Activated T-helper 1 cell treated with anti-CD3 and anti-CD28 coated beads, Interleukin-12 subunit alpha, Interleukin-12 subunit beta, Interleukin-2, Interleukin-4 antibody, amounts not matched to agents 30 ng/mL and 10 ng/mL and 1 ng/mL, durations not matched to agents 14 hours and 24 hours and 36 hours (primary cell): ENCODE measurements at regions of chr14 and their contacts with region 1.

Region 1: DNA sequence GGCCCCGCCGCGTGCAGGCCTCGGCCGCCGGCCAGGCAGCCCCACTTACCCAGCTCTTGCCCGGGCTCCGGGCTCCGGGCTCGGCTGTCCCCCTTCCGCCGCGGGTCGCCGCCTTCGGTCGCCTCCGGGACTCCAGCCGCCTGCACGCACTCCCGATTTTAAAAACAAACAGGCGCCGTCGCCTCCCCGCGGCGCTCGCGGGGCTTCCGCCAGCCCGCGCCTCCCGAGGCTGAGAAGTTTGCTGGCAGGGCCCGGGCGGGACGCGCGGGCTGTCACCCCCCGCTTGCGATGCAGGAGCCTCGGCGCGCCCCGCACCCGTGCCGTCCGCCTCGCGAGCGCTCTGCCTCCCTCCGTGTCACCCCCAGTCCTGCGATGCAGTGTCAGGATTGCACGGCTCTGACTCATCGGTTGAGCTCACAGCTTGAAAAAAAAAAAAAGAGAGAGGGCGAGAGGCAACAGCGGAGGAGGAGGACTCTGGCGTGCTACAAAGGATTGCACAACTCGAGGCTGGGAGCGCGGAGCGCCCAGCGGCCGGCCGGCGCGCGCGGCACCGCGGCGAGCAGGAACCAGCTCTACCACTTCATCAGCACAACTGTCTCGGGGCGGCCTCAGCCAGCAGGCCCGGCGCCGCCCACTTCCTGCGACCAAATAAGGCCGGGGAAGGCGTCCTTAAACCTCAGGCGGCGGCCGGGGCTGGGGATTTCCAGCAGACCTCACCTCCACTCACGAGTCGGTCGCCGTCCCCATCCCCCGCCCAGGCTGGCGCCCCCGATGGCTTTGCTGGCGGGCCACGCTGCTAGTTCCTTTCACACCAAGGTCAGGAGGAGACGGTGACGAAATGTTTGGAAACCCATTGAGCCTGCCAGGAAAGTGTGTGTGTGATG is 45.8 kb upstream of the PNMA1 start:
- DNase-seq: peak; percentile 95
- H3K4me3 Mint-ChIP-seq: peak overlapping the region; percentile 85
- H3K27ac Mint-ChIP-seq: peak overlapping the region; percentile 97
- H3K4me1 Mint-ChIP-seq: peaks cover 79% of the 10 kb centered on the region
- H3K27me3 Mint-ChIP-seq: no peaks in the 10 kb centered on the region

Region 2: DNA sequence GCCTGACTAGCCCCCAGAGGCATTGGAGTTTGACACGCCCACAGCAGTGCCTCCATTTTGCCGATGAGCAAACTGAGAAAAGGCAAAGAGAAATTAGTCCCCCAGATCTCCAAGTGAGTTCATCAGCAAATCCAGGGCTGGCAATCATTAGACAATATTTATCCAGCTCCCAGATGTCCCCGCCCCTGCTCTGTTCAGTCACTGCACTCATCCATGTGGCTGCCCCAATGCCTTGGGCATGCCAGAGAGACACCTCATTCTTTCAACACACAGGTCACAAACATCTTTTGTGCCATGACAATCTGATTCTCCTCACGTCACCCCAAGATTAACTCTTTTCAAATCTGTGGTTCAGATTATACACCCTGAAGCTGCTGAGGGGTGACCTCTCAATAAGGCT is 909.6 kb before region 1 on chr14:
- intact Hi-C with region 1: no loop called
- DNase-seq: no peak
- H3K4me3 Mint-ChIP-seq: no peak overlapping the region
- H3K27ac Mint-ChIP-seq: no peak overlapping the region
- H3K4me1 Mint-ChIP-seq: peaks cover 14% of the 10 kb centered on the region
- H3K27me3 Mint-ChIP-seq: peaks cover 3% of the 10 kb centered on the region

Region 3: GRCh38 chr14:73644531-73645247 is 115.3 kb before region 1 on chr14 and contains the start of gene DNAL1:
- intact Hi-C with region 1: loop called (anchors 2 kb)
- DNase-seq: peak; percentile 92
- H3K4me3 Mint-ChIP-seq: peak within 1 kb of the TSS; percentile 86
- H3K27ac Mint-ChIP-seq: peak within 1 kb of the TSS; percentile 71
- H3K4me1 Mint-ChIP-seq: peaks cover 15% of the 10 kb centered on the region
- H3K27me3 Mint-ChIP-seq: no peaks in the 10 kb centered on the region
- total RNA-seq, gene DNAL1: 5.3 and 8.5 TPM in 2 replicates

Region 4: DNA sequence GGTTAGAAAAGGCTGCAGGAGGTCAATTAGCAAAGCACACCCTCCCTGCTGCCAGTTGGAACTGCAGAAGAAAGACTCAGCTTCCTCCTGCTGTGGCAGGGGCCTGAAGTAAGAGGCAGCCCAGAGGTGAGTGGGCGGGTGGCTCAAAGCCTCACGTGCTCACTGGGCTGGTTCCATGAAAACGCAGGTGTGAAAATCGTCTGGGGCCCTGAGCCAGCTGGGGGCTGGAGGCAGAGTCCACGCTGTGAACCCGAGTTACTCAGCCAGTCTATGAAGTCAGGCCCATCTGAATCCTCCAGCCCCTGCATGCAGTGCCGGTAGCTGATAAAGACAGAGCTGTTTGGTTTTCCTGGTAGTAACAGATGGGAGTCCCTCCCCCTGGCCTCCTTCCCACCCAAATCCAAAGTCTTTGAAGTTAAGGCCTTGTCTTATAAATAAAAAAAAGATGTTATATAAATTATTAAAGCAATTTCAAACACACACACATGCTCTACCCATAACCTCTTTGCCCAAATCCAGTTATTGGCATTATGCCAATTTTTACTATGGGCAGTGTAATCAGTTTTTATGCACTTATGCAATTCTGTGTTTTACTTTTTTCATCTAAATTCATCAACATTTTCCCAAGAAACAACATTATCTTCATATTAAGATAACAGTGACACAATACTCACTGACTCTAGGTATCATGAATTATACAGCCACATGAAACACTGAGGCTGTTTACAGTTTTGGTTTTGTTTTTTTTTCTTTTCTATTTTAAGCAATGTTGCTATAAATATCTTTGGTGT is 12.1 kb after region 1 on chr14:
- intact Hi-C with region 1: loop called (anchors 1 kb)
- DNase-seq: peak; percentile 56
- H3K4me3 Mint-ChIP-seq: peak overlapping the region; percentile 48
- H3K27ac Mint-ChIP-seq: peak overlapping the region; percentile 67
- H3K4me1 Mint-ChIP-seq: peaks cover 60% of the 10 kb centered on the region
- H3K27me3 Mint-ChIP-seq: no peaks in the 10 kb centered on the region